ENCODE measurements at regions of chr10 and their contacts with region 1.

Region 1: DNA sequence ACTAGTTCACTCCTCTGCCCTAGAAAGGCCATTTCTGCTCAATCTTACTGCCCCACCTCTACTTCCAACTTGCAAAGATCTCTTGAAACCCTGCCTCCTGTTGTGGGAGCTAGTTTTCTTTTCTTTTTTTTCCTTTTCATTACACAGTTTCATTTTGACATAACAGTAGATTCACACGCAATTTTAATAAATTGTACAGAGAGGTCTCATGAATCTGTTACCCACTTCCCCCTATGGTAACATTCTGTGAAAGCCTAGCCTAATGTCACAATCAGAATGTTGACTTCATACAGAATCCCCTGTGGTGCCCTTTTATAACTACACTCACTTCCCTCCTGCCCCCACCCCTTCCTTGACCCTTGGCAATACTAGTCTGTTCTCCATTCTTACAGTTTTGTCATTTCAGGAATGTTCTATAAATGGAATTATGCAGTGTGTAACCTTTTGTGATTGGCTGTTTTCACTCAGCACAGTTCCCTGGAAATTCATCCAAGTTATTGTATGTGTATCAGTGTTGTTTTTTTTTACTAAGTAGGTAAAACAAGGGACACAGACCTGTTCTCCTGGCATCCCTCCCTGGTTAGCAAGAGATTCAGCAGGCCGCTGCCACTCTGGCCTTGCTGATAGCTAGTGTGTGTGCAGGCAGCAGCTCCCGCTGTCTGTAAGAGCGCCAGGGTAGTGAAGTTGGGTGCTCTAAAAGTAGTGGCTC is 21.5 kb downstream of the CHST3 start:
- DNase-seq: peak; percentile 33
- H3K4me3 Mint-ChIP-seq: peak overlapping the region; percentile 3
- H3K27ac Mint-ChIP-seq: peak overlapping the region; percentile 73
- H3K4me1 Mint-ChIP-seq: peaks cover 22% of the 10 kb centered on the region
- H3K27me3 Mint-ChIP-seq: no peaks in the 10 kb centered on the region

Region 2: DNA sequence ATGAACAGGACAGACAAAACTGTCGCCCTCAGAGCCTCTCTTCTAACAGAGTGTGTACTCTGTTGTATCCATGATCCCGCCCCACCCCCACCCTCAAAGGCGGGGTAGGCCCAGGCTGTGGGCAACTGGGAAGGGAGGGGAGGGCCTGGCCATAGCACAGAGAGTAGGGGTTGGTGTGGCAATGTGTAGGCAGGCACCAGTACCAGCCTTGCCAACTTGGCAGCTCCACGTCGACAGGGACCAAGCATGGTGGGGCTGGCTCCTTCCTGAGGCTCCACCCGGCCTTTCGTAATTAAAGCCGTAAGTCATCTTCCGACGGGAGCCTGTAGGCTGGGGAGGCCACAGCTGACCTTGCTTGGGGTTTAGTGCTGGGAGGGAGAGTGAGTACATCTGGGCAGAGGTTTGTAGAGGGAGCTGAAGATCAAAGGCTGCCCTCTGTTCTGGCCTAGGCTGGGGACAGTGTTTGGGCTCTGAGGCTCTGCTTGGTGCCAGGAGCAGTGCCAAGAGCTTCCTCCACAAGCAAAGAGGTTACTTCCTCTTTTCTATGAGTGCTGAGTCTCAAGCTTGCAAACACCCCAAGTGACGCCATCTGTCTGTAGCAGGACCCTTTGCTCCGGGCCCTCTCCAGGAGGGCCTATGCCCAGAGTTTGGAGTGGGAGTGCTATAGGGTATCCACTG is 387.7 kb before region 1 on chr10:
- CTCF ChIA-PET with region 1: no interaction called
- intact Hi-C with region 1: no loop called
- DNase-seq: no peak
- H3K4me3 Mint-ChIP-seq: no peak overlapping the region
- H3K27ac Mint-ChIP-seq: no peak overlapping the region
- H3K4me1 Mint-ChIP-seq: peaks cover 6% of the 10 kb centered on the region
- H3K27me3 Mint-ChIP-seq: no peaks in the 10 kb centered on the region

Region 3: DNA sequence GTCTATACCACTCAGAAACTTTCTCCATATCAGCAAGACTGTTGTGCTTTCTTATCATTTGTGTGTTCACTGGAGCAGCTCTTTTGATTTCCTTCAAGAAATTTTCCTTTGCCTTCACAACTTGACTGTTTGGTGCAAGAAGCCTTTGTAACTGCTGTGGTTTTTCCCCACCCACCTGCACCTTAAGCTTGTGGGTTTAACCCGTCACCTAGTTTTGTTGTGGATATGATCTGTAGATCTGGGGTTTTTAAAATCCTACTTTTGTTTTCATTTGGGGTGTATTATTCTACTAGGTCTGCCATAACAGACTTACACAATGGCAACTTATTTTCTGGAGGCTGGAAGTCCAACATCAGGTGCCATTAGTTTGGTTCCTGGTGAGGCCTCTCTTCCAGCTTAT is 52.0 kb before region 1 on chr10:
- CTCF ChIA-PET with region 1: no interaction called
- intact Hi-C with region 1: loop called (anchors 1 kb)
- DNase-seq: peak; percentile 87
- H3K4me3 Mint-ChIP-seq: no peak overlapping the region
- H3K27ac Mint-ChIP-seq: peak overlapping the region; percentile 69
- H3K4me1 Mint-ChIP-seq: peaks cover 36% of the 10 kb centered on the region
- H3K27me3 Mint-ChIP-seq: no peaks in the 10 kb centered on the region

Region 4: GRCh38 chr10:71957546-71958275 is 28.0 kb before region 1 on chr10:
- CTCF ChIA-PET with region 1: interaction called, 19 read pairs
- intact Hi-C with region 1: no loop called
- DNase-seq: no peak
- H3K4me3 Mint-ChIP-seq: no peak overlapping the region
- H3K27ac Mint-ChIP-seq: no peak overlapping the region
- H3K4me1 Mint-ChIP-seq: no peaks in the 10 kb centered on the region
- H3K27me3 Mint-ChIP-seq: peaks cover 9% of the 10 kb centered on the region

Region 5: DNA sequence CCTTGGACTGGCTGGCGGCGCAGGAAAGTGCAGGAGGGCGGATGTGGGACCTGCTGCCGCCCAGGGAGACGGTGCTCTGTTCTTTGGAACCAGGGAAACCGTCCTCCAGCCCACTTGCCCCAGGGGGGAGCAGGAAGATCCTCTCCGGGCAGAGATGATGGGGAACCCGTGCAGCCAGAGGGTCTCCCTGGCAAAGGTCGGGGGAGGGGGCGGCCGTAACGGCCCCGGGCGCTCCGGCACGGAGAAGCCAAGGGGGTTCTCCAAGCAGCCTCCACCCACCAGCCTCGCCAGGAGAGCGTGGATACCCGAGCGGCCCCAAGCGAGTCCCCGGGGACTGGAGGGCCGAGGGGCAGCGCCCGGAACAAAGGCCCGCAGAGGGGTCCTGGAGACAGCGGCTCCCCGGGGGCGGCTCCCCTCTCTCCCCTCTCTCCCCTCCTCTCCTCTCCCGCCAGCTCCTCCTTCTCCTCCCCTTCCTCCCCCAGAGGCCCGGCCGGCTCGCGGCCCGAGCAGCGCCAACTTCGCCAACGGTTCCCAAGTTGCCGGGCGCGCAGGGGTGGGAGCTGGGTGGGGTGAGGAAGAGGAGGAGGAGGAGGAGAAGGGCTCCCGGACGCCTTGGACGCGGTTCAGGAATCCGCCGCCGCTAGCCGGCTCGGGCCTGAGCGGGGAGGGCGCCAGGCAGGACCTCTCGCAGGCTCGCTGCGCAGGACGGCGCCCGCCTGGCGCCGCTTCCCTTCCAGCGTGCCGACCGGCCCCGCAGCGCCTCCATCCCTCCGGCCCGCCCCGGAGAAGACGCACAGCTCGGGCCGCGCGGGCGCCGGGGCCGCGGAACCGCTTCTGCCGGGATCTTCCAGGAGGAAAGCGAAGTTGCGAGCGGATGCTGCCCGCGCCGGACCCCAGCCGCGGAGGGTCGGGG is 21.7 kb before region 1 on chr10 and contains the start of gene CHST3:
- CTCF ChIA-PET with region 1: interaction called, 3 read pairs
- intact Hi-C with region 1: loop called (anchors 2 kb)
- DNase-seq: peak; percentile 19
- H3K4me3 Mint-ChIP-seq: peak within 1 kb of the TSS; percentile 80
- H3K27ac Mint-ChIP-seq: peak within 1 kb of the TSS; percentile 58
- H3K4me1 Mint-ChIP-seq: peaks cover 14% of the 10 kb centered on the region
- H3K27me3 Mint-ChIP-seq: peaks cover 26% of the 10 kb centered on the region
- total RNA-seq, gene CHST3: 0.55 to 0.57 TPM

Region 6: GRCh38 chr10:71974489-71975021 is 11.1 kb before region 1 on chr10:
- CTCF ChIA-PET with region 1: interaction called, 12 read pairs
- intact Hi-C with region 1: no loop called
- DNase-seq: peak; percentile 65
- H3K4me3 Mint-ChIP-seq: no peak overlapping the region
- H3K27ac Mint-ChIP-seq: peak overlapping the region; percentile 38
- H3K4me1 Mint-ChIP-seq: peaks cover 38% of the 10 kb centered on the region
- H3K27me3 Mint-ChIP-seq: no peaks in the 10 kb centered on the region